ENCODE measurements at regions of chr7 and their contacts with region 1.

Region 1: GRCh38 chr7:136941816-136942215 is 73.4 kb downstream of the CHRM2 start:
- DNase-seq: no peak
- H3K4me3 ChIP-seq: no peak overlapping the region
- H3K27ac ChIP-seq: no peak overlapping the region
- H3K4me1 ChIP-seq: no peaks in the 10 kb centered on the region
- H3K27me3 ChIP-seq: no peaks in the 10 kb centered on the region
- CTCF ChIP-seq: no peak
- POLR2A ChIP-seq: no peak

Region 2: DNA sequence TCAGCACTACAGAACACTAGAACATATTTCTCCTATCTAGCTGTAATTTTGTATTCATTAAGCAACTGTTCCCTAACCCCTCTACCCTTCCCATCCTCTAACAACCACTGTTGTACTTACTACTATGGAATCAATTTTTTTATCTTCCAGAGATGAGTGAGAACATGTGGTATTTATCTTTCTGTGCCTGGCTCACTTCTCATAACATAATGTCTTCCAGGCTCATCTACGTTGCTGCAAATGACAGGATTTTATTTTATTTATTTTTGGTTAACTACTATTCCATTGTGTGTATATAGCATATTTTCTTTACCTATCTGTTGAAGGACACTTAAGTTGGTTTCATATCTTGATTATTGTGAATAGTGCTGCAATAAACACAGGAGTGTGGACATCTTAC is 274.2 kb before region 1 on chr7:
- intact Hi-C with region 1: no loop called
- DNase-seq: no peak
- H3K4me3 ChIP-seq: no peak overlapping the region
- H3K27ac ChIP-seq: no peak overlapping the region
- H3K4me1 ChIP-seq: no peaks in the 10 kb centered on the region
- H3K27me3 ChIP-seq: no peaks in the 10 kb centered on the region
- CTCF ChIP-seq: no peak
- POLR2A ChIP-seq: no peak

Region 3: GRCh38 chr7:137254766-137255165 is 312.9 kb after region 1 on chr7:
- intact Hi-C with region 1: loop called (anchors 5 kb)
- DNase-seq: no peak
- H3K4me3 ChIP-seq: no peak overlapping the region
- H3K27ac ChIP-seq: no peak overlapping the region
- H3K4me1 ChIP-seq: no peaks in the 10 kb centered on the region
- H3K27me3 ChIP-seq: no peaks in the 10 kb centered on the region
- CTCF ChIP-seq: no peak
- POLR2A ChIP-seq: no peak